CD8-positive, alpha-beta T cell (primary cell): ENCODE measurements at regions of chr6 and their contacts with region 1.

Region 1: DNA sequence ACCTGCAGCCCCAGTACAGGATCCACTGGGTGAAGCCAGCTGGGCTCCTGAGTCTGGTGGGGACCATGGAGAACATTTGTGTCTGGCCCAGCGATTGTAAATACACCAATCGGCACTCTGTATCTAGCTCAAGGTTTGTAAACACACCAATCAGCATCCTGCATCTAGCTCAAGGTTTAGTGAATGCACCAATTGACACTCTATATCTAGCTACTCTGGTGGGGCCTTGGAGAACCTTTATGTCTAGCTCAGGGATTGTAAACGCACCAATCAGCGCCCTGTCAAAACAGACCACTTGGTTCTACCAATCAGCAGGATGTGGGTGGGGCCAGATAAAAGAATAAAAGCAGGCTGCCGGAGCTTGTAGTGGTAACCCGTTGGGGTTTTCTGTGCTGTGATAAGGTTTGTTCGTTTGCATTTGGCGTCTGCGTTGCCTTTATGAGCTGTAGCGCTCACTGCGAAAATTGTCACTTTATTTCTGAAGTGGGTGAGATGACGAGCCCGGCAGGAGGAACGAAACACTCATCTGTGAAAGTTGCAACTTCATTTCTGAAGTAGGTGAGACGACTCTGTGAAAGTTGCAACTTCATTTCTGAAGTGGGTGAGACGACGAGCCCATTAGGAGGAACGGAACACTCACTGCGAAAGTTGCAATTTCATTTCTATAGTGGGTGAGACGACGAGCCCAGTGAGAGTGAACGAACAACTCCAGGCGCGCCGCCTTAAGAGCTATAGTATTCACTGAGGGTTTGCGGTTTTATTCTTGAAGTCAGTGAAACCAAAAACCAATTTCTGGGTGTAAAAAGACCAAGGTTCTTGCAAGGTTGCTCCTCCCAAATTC is 31.1 kb downstream of the SERPINB6 start:
- DNase-seq: peak; percentile 52 to 91 (median 73)
- ATAC-seq: peak; percentile 70
- H3K4me3 ChIP-seq: peak overlapping the region; percentile 52 to 75
- H3K4me3 Mint-ChIP-seq: peak overlapping the region; percentile 84
- H3K27ac ChIP-seq: peak overlapping the region; percentile 73 to 84
- H3K27ac Mint-ChIP-seq: peak overlapping the region; percentile 94
- H3K4me1 ChIP-seq: peaks cover 87% of the 10 kb centered on the region
- H3K4me1 Mint-ChIP-seq: peaks cover 80% of the 10 kb centered on the region
- H3K27me3 ChIP-seq: no peaks in the 10 kb centered on the region
- H3K27me3 Mint-ChIP-seq: no peaks in the 10 kb centered on the region
- CTCF ChIP-seq: no peak

Region 2: DNA sequence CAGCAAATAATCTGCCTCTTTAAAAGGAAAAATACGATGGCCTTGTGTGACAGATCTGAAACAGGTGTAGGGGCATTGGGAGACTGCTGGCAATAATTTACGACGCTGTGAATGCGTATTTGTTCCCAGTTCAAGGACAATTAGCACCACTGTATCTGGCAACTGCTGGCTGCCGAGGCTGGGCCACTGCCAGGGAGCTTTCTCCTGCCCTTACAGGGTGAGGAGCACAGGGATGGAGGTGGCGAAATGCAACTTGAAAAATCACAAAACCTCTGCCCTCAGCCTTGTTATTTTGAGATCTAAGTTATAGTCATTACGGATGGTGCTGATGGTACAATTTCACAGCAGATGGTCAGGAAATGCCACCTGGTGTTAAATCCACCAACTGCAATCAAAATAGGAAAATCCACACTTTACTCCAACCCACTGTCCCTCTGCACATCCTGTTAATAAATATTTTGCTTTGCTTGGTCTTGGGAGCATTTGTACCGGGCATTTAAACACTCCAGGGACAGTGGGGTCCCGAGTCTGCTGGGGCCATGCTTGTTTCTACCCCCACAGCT is 195.9 kb before region 1 on chr6:
- CTCF ChIA-PET with region 1: no interaction called
- POLR2A ChIA-PET with region 1: no interaction called
- intact Hi-C with region 1: no loop called
- DNase-seq: no peak
- ATAC-seq: no peak
- H3K4me3 ChIP-seq: no peak overlapping the region
- H3K4me3 Mint-ChIP-seq: no peak overlapping the region
- H3K27ac ChIP-seq: no peak overlapping the region
- H3K27ac Mint-ChIP-seq: no peak overlapping the region
- H3K4me1 ChIP-seq: no peaks in the 10 kb centered on the region
- H3K4me1 Mint-ChIP-seq: no peaks in the 10 kb centered on the region
- H3K27me3 ChIP-seq: no peaks in the 10 kb centered on the region
- H3K27me3 Mint-ChIP-seq: peaks cover 4% of the 10 kb centered on the region
- CTCF ChIP-seq: no peak

Region 3: GRCh38 chr6:2971420-2972218 is 31.4 kb after region 1 on chr6 and contains the start of gene SERPINB6:
- CTCF ChIA-PET with region 1: interaction called, 5 read pairs
- POLR2A ChIA-PET with region 1: interaction called, 5 read pairs
- intact Hi-C with region 1: loop called in 1 of 2 experiments (anchors 1 kb)
- DNase-seq: peak in 8 of 9 experiments; percentile 24 to 69 (median 42)
- ATAC-seq: peak; percentile 54
- H3K4me3 ChIP-seq: peak within 1 kb of the TSS; percentile 61 to 77
- H3K4me3 Mint-ChIP-seq: peak within 1 kb of the TSS; percentile 90
- H3K27ac ChIP-seq: peak within 1 kb of the TSS; percentile 64
- H3K27ac Mint-ChIP-seq: peak within 1 kb of the TSS; percentile 92
- H3K4me1 ChIP-seq: peaks cover 21% of the 10 kb centered on the region
- H3K4me1 Mint-ChIP-seq: peaks cover 53% of the 10 kb centered on the region
- H3K27me3 ChIP-seq: no peaks in the 10 kb centered on the region
- H3K27me3 Mint-ChIP-seq: no peaks in the 10 kb centered on the region
- CTCF ChIP-seq: no peak
- total RNA-seq, gene SERPINB6: 41.7 to 45.6 TPM